GM10248 (cell line): ENCODE measurements at regions of chr21 and their contacts with region 1.

Region 1: DNA sequence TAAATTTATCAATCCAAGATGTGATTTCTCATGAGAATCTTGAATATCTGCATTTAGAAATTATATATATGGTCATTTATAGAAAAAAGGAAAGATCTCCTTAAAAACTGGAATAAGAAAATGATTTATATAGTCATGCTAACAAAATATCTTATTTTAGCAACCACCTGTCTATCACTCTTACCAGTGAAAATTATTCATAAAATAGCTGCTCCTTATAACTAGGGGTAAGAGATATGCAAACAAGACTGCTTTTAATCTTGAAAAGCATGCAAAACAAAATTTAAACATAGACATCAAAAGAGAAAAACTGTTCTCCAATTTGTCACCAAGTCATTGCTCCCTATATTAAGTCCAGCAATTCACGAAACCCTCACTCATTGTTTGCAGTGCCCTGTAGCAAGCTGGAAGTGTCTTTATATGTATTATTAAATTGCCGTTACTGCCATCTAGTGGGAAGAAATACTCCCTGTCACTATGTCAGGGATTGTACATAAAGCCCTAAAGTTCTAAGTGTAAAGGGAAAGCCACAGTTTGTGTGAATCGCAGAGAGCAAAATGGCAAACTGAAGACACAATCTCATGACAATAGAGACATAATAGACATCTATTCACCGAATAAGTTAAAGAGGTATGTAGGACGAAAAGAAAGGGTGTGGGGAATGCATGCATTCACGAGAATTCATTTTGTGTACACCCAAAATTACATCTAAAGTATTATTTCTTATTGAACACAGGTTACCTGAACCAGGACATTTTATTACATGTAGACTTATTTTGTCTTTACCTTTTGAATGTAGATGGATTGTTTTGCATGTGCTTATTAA is 600.5 kb downstream of the USP25 start:
- DNase-seq: peak; percentile 6
- CTCF ChIP-seq: peak; percentile 63

Region 2: GRCh38 chr21:16082038-16082816 is 248.1 kb before region 1 on chr21:
- CTCF ChIA-PET with region 1: interaction called, 26 read pairs
- POLR2A ChIA-PET with region 1: no interaction called
- DNase-seq: no peak
- CTCF ChIP-seq: peak; percentile 7

Region 3: GRCh38 chr21:16294128-16294527 is 36.2 kb before region 1 on chr21:
- CTCF ChIA-PET with region 1: no interaction called
- POLR2A ChIA-PET with region 1: no interaction called
- DNase-seq: no peak
- CTCF ChIP-seq: no peak

Region 4: GRCh38 chr21:16342932-16343331 is 12.6 kb after region 1 on chr21:
- CTCF ChIA-PET with region 1: interaction called, 10 read pairs
- POLR2A ChIA-PET with region 1: no interaction called
- DNase-seq: no peak
- CTCF ChIP-seq: no peak